Cardiac septum (tissue), 1 donor: ENCODE measurements at regions of chr2 and their contacts with region 1.

Region 1: GRCh38 chr2:61969376-61969775 is 63.9 kb downstream of the COMMD1 start:
- DNase-seq: no peak

Region 2: DNA sequence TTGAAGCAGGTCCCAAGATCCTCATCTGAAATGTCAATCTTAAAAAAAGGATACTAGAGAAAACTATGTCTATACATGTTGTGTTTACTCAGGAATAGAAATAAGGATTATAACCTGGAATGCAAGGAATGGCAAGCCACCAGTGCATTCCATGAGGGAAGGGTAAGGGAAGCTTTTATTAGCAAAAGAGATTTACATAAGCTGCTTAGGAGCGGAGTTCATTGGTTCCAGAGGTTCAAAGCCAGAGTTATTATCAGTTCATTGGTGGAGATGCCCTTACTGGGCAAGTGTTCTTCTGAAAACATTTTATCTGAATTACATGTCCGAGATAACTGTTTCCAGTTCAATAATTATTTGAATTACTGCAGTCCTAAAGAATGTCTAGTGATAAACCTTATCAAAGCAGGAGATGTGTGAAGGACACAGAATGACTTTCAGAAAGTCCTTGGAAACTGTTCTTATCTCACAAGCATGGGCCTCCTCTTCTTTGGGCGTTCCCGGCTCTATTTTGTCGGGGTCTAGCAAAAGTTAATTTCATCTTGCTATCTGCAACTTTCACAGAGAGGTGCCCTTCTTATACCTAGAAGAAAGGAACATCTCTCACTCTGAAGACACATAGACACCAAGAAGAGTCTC is 40.4 kb before region 1 on chr2:
- intact Hi-C with region 1: loop called (anchors 5 kb)
- DNase-seq: no peak